ENCODE measurements at regions of chr3 and their contacts with region 1.

Region 1: DNA sequence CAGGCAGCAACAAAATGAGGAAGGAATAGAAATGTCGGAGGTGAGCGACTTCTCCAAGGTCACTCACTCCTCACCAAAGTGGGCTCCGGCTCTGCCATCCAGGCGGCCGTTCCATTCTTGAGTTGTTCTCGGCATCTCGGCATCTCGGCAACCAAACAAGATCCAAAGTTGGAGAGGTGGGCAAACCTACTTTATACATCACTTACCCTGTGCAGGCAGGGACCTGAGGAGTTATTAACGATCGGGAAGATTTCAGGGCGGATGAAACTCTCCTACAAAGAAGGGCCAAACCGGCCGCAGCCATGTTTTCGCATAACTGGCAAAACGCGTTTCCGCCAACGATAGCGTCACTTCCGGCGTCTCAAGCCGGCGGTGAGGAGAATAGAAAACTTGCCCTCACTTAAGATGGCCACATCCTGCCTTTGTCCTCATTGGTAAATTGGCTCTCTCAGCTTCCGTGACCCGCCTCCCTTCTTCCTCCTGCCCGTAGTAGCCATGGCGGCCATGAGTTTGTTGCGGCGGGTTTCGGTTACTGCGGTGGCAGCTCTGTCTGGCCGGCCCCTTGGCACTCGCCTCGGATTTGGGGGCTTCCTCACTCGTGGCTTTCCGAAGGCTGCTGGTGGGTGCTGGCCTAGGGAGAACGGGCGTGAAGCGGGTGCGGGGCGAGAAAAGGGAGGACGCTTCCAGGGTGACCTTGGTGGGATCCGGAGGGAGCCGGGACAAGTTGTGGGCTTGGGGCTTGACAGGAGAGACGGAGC is at the starts of genes MRPL47 and NDUFB5:
- DNase-seq: peak; percentile 82
- ATAC-seq: peak; percentile 96
- H3K4me3 Mint-ChIP-seq: peak within 1 kb of the TSS; percentile 99
- H3K27ac Mint-ChIP-seq: peak within 1 kb of the TSS; percentile 99
- H3K4me1 Mint-ChIP-seq: peaks cover 51% of the 10 kb centered on the region
- H3K27me3 Mint-ChIP-seq: no peaks in the 10 kb centered on the region
- CTCF ChIP-seq: no peak
- total RNA-seq, gene MRPL47: 38.6 and 44.3 TPM in 2 replicates
- total RNA-seq, gene NDUFB5: 63.5 and 67.3 TPM in 2 replicates

Region 2: DNA sequence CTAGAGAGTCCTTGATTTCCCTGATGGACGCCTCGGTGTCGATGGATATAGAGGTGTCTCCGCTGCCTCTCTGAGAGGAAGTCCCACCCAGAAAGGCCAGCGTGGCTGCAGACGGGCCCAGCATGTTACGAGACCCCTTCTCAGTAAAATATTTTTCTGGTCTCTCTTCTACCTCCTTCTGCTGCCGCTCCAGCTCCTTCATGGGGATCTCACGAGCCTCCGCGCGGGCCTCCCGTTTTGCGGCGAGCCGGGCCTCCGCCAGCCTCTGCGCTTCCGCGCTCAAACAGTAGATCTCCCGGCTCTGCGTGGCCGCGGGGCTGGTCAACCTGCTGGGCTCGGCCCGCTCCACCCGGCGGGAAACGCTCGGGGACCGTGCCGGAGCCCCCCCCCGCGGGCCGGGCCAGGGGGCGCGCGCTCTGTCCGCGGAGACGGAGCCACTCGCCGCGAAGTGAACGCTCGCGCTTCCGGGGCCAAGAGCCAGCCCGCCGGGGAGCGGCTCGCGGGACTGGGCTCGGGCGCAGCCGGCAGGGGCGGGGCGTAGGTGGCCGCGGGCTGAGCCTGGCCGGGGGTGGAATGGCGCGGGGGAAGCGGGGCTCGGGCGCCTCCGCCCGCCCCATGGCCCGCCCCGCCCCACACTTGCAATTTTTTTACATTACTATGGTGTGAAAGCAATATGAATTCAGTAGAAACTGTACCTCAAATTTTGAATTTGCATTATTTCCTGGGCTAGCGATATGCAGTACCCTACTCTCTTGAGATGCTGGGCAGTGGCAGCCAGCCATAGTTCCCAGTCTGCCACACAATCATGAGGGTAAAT is 343.3 kb before region 1 on chr3:
- CTCF ChIA-PET with region 1: no interaction called
- POLR2A ChIA-PET with region 1: no interaction called
- intact Hi-C with region 1: loop called (anchors 5 kb)
- DNase-seq: peak; percentile 75
- ATAC-seq: peak; percentile 88
- H3K4me3 Mint-ChIP-seq: peak overlapping the region; percentile 84
- H3K27ac Mint-ChIP-seq: peak overlapping the region; percentile 71
- H3K4me1 Mint-ChIP-seq: peaks cover 53% of the 10 kb centered on the region
- H3K27me3 Mint-ChIP-seq: no peaks in the 10 kb centered on the region
- CTCF ChIP-seq: no peak

Region 3: GRCh38 chr3:179438841-179439240 is 165.7 kb before region 1 on chr3:
- CTCF ChIA-PET with region 1: no interaction called
- POLR2A ChIA-PET with region 1: no interaction called
- intact Hi-C with region 1: loop called (anchors 1 kb)
- DNase-seq: peak; percentile 41
- ATAC-seq: peak; percentile 96
- H3K4me3 Mint-ChIP-seq: peak overlapping the region; percentile 71
- H3K27ac Mint-ChIP-seq: peak overlapping the region; percentile 92
- H3K4me1 Mint-ChIP-seq: peaks cover 51% of the 10 kb centered on the region
- H3K27me3 Mint-ChIP-seq: no peaks in the 10 kb centered on the region
- CTCF ChIP-seq: no peak

Region 4: DNA sequence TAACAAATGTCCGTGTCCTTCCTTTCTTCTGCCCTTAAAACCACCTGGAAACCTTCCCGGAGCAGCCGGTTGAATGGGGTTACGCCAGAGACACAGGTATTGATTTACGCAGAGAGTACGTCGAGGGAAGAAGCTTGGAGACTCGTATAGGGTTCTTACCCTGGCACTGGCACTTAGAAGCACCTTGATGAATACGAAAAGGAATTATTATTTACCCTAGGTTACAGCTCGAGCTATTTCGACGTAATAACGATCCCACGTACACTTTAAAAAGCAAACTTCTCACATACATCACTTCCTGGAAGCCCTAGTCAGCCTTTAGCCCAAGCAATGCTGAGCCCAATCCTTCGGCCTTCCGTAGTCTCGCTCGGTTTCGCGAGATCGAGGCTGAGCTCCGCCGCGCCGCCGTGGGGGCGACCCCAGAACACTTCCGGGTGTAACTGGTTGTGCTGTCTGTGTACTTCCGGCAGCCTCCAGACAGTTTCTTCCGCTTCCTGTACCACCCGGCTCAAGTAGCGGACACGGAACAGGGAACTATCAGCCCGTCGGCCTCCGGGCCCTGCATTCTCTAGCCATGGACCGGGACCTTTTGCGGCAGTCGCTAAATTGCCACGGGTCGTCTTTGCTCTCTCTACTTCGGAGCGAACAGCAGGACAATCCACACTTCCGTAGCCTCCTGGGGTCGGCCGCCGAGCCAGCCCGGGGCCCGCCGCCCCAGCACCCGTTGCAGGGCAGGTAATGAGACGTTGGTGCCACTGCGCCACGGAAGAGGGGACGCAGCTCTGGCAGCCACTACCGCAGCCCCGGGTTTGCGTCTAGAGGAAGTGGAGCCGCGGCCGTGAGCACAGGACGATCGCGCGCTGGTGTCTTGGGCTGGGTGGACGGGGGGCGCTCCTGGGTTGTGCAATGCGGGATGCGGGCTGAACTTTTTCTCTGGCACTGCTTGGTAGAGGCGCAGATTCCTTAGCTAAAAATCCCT is 997.5 kb after region 1 on chr3 and contains the start of gene TTC14:
- CTCF ChIA-PET with region 1: no interaction called
- POLR2A ChIA-PET with region 1: interaction called, 3 read pairs
- intact Hi-C with region 1: loop called (anchors 2 kb)
- DNase-seq: peak; percentile 81
- ATAC-seq: peak; percentile 91
- H3K4me3 Mint-ChIP-seq: peak within 1 kb of the TSS; percentile 97
- H3K27ac Mint-ChIP-seq: peak within 1 kb of the TSS; percentile 95
- H3K4me1 Mint-ChIP-seq: peaks cover 22% of the 10 kb centered on the region
- H3K27me3 Mint-ChIP-seq: peaks cover 5% of the 10 kb centered on the region
- CTCF ChIP-seq: no peak
- total RNA-seq, gene TTC14: 81.5 and 82.2 TPM in 2 replicates

Measured in activated B cell treated with CpG ODN at 0.5 μM for 24 hours (primary cell).